CD8-positive, alpha-beta T cell (primary cell): ENCODE measurements at regions of chr6 and their contacts with region 1.

Region 1: DNA sequence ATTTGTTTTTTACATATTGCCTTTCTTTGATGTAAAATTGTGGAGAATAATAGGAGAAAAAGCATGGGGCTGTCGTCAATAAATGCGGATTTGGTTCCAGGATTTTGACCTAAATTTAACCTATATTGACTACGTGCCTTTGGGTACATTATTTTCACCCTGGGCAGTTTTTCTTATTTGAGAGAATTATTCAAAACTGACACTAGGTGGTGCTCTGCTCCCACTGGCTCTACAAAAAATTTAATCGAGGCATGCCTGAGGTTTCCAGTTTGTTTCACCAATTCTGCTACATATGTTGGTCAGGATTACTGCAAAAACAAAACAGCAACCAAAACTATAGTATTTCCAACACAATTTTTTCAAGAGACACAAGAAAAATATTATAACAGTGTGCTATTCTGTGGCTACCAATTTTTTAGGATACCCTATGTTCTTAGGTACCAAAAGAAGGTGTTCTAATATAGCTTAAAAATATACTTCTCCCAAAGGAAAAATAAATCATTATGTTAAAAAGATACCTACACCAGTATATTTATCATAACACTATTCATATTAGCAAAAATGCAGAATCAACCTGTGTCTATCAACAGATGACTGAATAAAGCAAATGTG is 48.6 kb upstream of the FABP7 start:
- DNase-seq: peak in 2 of 9 experiments; percentile 23 to 45
- ATAC-seq: no peak
- H3K4me3 ChIP-seq: no peak overlapping the region
- H3K4me3 Mint-ChIP-seq: no peak overlapping the region
- H3K27ac ChIP-seq: no peak overlapping the region
- H3K27ac Mint-ChIP-seq: no peak overlapping the region
- H3K4me1 ChIP-seq: no peaks in the 10 kb centered on the region
- H3K4me1 Mint-ChIP-seq: no peaks in the 10 kb centered on the region
- H3K27me3 ChIP-seq: peaks cover 0 to 2% of the 10 kb centered on the region in 2 experiments
- H3K27me3 Mint-ChIP-seq: peaks cover 6% of the 10 kb centered on the region
- CTCF ChIP-seq: peak; percentile 60

Region 2: DNA sequence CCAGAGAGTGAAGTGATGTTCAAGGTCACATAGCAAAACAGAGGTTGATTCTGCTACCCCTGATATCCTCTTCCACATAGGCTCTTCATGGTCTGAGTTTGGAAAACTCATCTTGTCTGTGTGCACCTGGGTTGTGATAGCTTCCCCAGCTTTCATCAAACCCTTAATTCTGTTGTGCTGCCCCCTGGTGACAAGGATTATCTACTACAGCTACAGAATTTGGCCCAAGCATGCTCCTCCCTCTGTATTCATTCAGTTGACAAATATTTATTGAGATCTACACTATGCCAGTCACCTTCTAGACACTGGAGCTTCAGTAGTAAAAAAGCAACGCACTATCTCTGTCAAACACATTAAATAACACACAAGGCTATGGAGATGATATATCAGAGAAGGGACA is 108.6 kb after region 1 on chr6:
- CTCF ChIA-PET with region 1: interaction called, 14 read pairs
- POLR2A ChIA-PET with region 1: no interaction called
- intact Hi-C with region 1: loop called (anchors 1 kb)
- DNase-seq: peak in 6 of 9 experiments; percentile 14 to 57 (median 44)
- ATAC-seq: peak; percentile 46
- H3K4me3 ChIP-seq: no peak overlapping the region
- H3K4me3 Mint-ChIP-seq: no peak overlapping the region
- H3K27ac ChIP-seq: no peak overlapping the region
- H3K27ac Mint-ChIP-seq: no peak overlapping the region
- H3K4me1 ChIP-seq: no peaks in the 10 kb centered on the region
- H3K4me1 Mint-ChIP-seq: no peaks in the 10 kb centered on the region
- H3K27me3 ChIP-seq: no peaks in the 10 kb centered on the region
- H3K27me3 Mint-ChIP-seq: peaks cover 4% of the 10 kb centered on the region
- CTCF ChIP-seq: peak; percentile 53

Region 3: GRCh38 chr6:123316733-123317323 is 585.9 kb after region 1 on chr6:
- CTCF ChIA-PET with region 1: no interaction called
- POLR2A ChIA-PET with region 1: no interaction called
- intact Hi-C with region 1: loop called in 1 of 2 experiments (anchors 2 kb)
- DNase-seq: peak in 1 of 9 experiments; percentile 12
- ATAC-seq: no peak
- H3K4me3 ChIP-seq: no peak overlapping the region
- H3K4me3 Mint-ChIP-seq: no peak overlapping the region
- H3K27ac ChIP-seq: no peak overlapping the region
- H3K27ac Mint-ChIP-seq: no peak overlapping the region
- H3K4me1 ChIP-seq: no peaks in the 10 kb centered on the region
- H3K4me1 Mint-ChIP-seq: no peaks in the 10 kb centered on the region
- H3K27me3 ChIP-seq: no peaks in the 10 kb centered on the region
- H3K27me3 Mint-ChIP-seq: no peaks in the 10 kb centered on the region
- CTCF ChIP-seq: peak; percentile 50